Sigmoid colon (tissue), 7 donors: ENCODE measurements at regions of chr13 and their contacts with region 1.

Region 1: DNA sequence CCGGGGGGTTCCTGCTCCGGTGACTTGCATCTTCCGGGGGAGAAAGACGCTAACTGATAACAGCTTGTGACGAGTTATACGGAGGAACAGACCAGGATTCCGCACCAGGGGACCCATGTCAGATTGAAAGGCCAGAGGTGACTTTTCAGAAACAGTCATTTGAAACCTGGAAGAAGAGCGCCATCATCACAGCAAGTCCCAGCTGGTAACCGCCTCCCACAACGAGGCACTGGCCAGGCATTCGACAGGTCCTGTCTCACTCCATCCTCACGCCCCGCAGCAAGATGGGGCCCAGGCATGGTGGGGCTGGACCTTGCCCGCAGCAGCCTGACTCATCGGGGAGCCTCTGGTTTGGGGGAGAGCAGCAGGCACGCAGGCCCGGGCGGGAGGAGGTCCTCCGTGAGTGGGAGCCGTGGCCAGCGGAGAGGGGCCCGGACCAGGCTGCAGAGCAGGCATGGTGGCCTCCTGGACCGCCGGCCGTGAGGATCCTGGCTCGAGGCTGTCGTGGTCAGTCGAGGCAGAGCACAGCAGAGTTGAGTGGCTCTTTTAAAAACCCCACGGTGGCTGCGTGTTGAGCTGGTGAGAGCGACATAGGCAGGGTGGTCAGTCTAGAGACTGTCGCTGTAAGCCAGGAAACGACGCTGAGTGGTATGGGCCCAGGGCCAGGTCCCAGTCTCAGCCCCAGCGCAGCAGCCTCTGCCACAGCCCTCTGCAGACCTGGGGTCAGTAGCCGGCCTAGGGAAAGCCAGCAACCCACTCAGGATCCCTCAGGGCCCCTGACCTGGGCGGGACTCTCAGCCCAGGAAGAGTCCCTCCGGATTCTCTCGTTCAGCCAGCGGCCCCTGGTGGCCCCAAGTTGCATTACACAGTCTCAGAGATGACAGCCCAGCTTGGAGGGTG is 94.9 kb upstream of the MCF2L start:
- DNase-seq: peak; percentile 86
- H3K4me3 ChIP-seq: peak overlapping the region in 1 of 4 donors; percentile 13
- H3K27ac ChIP-seq: peak overlapping the region in 3 of 4 donors; percentile 14 to 27 (median 17)
- H3K4me1 ChIP-seq: peaks cover 0 to 6% (median 6%) of the 10 kb centered on the region in 4 donors
- H3K27me3 ChIP-seq: no peaks in the 10 kb centered on the region
- CTCF ChIP-seq: peak; percentile 72 to 94 (median 90)
- EP300 ChIP-seq: no peak
- POLR2A ChIP-seq: no peak

Region 2: GRCh38 chr13:112133499-112134390 is 740.4 kb before region 1 on chr13:
- intact Hi-C with region 1: no loop called
- DNase-seq: no peak
- H3K4me3 ChIP-seq: no peak overlapping the region
- H3K27ac ChIP-seq: no peak overlapping the region
- H3K4me1 ChIP-seq: no peaks in the 10 kb centered on the region
- H3K27me3 ChIP-seq: peaks cover 0 to 55% (median 0%) of the 10 kb centered on the region in 3 donors
- CTCF ChIP-seq: no peak
- EP300 ChIP-seq: no peak
- POLR2A ChIP-seq: no peak

Region 3: DNA sequence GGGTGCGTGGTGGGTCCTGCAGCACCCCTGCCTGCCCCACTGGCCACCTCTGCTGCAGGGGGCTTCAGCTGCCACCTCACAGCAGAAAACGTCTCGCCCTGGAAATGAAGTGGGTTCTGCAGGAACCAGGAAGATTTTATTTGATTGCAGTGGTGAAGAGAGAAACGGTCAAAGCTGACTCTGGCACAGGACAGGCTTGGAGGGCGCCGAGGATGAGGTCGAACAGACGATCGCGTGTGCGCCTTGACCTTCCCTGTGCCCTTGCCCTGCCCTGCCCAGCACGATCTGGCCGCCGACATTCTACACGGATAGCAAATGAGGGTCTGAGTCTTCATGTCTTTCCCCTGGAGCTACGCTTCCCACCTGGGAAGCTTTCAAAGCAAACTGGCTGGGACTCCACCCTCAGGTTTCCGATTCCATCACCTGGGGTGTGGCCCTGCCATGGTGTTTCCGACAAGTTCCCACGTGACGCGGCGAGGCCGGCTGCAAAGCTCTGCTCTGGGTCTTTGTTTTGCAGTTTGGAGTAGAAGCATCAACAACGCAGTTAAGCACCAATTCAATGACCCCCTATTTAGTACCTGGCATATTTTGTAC is 235.8 kb before region 1 on chr13:
- intact Hi-C with region 1: loop called (anchors 1 kb)
- DNase-seq: no peak
- H3K4me3 ChIP-seq: no peak overlapping the region
- H3K27ac ChIP-seq: no peak overlapping the region
- H3K4me1 ChIP-seq: peaks cover 0 to 19% (median 12%) of the 10 kb centered on the region in 4 donors
- H3K27me3 ChIP-seq: no peaks in the 10 kb centered on the region
- CTCF ChIP-seq: no peak
- EP300 ChIP-seq: no peak
- POLR2A ChIP-seq: no peak

Region 4: DNA sequence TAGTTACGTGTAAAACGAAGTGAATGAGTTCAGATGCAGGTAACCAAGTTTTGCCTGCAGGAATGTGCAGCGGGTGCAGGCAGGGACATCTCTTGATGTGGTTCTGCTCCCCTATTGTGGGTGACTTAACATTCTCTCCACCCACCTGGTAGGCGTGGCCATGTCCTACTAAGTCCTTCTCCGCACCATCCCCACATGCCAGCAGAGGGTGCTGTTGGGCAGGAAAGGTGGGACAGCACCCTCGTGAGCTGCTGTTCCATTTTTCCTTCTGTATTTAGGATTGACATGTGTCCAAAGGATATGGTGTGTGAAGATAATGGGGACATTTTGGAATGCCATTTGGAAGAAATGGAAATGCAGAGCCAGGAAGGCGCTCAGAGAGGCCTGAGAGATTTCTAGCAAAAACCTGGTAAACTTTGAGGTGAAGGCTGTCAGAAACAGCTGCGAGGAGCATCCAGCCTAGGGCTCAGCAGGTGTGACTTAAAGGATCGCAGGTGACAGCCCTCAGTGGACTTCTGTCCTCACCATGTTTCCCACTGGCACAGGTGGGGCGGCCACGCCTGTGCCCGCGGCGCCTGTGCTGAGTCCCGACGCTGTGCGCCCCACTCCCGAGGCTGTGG is 68.7 kb after region 1 on chr13:
- intact Hi-C with region 1: no loop called
- DNase-seq: peak; percentile 96
- H3K4me3 ChIP-seq: peak overlapping the region in 3 of 4 donors; percentile 47 to 68 (median 54)
- H3K27ac ChIP-seq: peak overlapping the region; percentile 21 to 70 (median 43)
- H3K4me1 ChIP-seq: peaks cover 0 to 18% (median 12%) of the 10 kb centered on the region in 4 donors
- H3K27me3 ChIP-seq: no peaks in the 10 kb centered on the region
- CTCF ChIP-seq: peak; percentile 74 to 91 (median 86)
- EP300 ChIP-seq: no peak
- POLR2A ChIP-seq: no peak